ENCODE measurements at regions of chrX and their contacts with region 1.

Region 1: DNA sequence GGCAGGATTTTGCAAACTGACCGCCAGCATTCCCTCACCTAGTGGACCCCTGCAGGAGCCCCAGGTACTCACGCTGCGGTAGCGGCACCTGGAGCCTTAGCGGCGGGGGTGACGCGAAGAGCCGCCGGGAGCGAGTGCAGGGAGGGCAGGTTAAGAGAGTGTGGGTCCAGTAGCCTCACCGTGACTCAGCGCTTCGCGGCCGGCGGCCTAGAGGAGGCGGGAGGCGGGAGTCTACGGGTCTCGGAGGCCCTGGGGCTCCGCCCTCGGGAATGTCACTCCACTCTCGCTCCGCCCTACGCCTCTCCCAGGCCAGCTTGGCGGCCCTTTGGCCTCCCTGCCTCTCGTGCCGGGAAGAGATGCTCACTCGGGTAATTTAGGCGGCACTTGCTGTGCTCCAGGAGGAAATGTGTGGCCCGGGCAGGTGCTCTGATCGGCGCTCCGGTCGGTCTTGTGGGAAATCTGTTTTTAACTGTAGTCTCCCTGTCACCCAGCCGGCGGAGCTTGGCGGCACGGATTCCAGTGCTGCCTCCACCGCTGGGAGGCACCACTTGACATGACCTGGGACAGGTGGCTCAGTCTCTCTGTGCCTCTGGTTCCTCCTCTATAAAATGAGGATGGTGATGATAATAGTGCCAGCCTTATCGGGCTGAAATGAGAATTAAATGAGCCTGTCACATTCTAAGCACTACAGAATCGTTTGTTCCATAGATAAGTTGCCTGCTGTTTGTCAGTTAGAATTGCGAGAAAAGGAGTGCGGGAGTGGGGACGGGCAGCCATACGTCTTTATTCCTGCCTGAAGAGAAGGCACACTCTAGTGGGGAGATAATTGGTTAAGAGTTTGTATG is at the start of gene PIR:
- DNase-seq: peak; percentile 8
- ATAC-seq: peak; percentile 100
- H3K4me3 ChIP-seq: peak within 1 kb of the TSS; percentile 56 to 62
- H3K27ac ChIP-seq: peak within 1 kb of the TSS; percentile 81
- H3K4me1 ChIP-seq: no peaks in the 10 kb centered on the region
- H3K27me3 ChIP-seq: no peaks in the 10 kb centered on the region
- CTCF ChIP-seq: peak; percentile 78
- total RNA-seq, gene PIR: 19.7 TPM

Region 2: DNA sequence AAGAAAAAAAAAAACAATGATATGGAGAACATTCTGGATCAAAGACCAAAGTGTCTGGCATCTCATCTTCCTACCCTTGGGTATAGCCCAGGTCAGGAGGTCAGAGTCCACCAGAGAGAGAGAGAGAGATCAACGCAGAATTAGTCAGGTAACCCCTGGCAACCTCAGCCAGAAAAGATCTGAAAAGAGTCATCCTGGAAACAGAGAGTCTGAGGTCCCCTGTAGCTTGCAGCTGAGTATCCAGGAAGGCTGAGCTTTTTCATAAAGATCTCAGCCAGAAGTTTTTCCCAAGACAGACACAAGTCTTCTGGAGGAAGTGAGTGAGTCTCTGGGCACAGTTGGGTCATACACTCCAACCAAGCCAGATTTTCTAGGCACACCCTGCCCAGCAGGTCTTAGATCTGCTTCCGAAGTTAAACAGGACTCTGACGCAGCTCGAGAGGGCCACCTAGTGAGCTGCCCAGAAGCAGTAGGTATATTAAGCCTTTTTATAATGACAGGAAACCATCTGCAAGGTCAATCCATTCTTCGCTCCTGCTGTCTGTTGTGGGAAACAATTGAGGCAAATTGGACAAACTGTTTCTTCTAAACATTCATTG is 71.7 kb after region 1 on chrX:
- CTCF ChIA-PET with region 1: interaction called, 3 read pairs
- POLR2A ChIA-PET with region 1: no interaction called
- in situ Hi-C with region 1: no loop called
- intact Hi-C with region 1: loop called (anchors 2 kb)
- DNase-seq: peak; percentile 8
- ATAC-seq: no peak; the same call in 1 of the 2 replicates
- H3K4me3 ChIP-seq: no peak overlapping the region
- H3K27ac ChIP-seq: no peak overlapping the region
- H3K4me1 ChIP-seq: no peaks in the 10 kb centered on the region
- H3K27me3 ChIP-seq: no peaks in the 10 kb centered on the region
- CTCF ChIP-seq: peak; percentile 69

Region 3: DNA sequence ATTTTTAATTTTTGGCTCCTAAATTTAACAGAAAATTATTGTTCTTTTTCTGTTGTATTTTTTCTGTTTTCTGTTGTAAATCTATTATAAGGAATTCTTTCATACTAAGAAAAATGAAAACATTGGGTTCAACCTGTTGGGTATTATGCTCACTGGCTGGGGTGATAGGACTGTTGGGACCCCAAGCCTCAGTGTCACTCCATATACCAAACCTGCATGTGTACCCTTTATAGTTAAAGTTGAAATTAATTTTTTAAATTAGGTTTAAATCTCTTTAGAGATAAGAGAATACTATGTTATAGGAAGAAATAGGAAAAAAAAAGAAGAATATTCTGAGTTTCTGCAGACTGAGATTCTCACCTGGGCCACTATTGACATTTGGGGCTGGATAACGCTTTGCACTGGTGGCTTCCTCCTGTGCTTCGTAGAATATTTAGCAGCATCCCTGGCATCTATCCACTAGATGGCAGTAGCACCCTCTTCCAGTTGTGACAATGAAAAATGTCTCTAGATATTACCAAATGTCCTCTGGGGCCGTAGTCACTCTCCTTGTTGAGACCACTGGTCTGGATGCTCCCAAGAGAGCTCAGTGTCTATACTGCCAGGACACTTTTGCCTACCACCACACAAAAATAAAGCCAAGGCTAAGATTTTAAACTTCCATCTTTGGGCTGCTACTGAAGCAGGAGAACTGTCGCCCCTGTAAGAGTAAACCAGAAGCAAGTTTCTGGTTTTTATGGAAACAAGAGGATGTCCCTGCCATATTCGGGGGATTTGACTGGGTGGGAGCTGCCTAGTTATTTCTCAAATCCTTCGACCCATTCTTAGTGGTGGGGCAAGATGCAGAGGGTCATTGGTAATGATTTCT is 193.7 kb after region 1 on chrX:
- CTCF ChIA-PET with region 1: no interaction called
- POLR2A ChIA-PET with region 1: no interaction called
- in situ Hi-C with region 1: no loop called
- intact Hi-C with region 1: loop called (anchors 10 kb)
- DNase-seq: no peak
- ATAC-seq: no peak
- H3K4me3 ChIP-seq: no peak overlapping the region
- H3K27ac ChIP-seq: no peak overlapping the region
- H3K4me1 ChIP-seq: no peaks in the 10 kb centered on the region
- H3K27me3 ChIP-seq: no peaks in the 10 kb centered on the region
- CTCF ChIP-seq: peak; percentile 80

Measured in Panc1 (cell line).